Activated T-helper 1 cell treated with anti-CD3 and anti-CD28 coated beads, Interleukin-12 subunit alpha, Interleukin-12 subunit beta, Interleukin-2, Interleukin-4 antibody, amounts not matched to agents 30 ng/mL and 10 ng/mL and 1 ng/mL, durations not matched to agents 14 hours and 24 hours and 36 hours (primary cell): ENCODE measurements at regions of chr3 and their contacts with region 1.

Region 1: GRCh38 chr3:15427182-15427880 is at the starts of genes EAF1 and METTL6:
- DNase-seq: peak; percentile 81
- H3K4me3 Mint-ChIP-seq: peak within 1 kb of the TSS; percentile 97
- H3K27ac Mint-ChIP-seq: peak within 1 kb of the TSS; percentile 96
- H3K4me1 Mint-ChIP-seq: peaks cover 61% of the 10 kb centered on the region
- H3K27me3 Mint-ChIP-seq: no peaks in the 10 kb centered on the region
- total RNA-seq, gene EAF1: 27.3 and 27.8 TPM in 2 replicates
- total RNA-seq, gene METTL6: 15.0 and 15.8 TPM in 2 replicates

Region 2: DNA sequence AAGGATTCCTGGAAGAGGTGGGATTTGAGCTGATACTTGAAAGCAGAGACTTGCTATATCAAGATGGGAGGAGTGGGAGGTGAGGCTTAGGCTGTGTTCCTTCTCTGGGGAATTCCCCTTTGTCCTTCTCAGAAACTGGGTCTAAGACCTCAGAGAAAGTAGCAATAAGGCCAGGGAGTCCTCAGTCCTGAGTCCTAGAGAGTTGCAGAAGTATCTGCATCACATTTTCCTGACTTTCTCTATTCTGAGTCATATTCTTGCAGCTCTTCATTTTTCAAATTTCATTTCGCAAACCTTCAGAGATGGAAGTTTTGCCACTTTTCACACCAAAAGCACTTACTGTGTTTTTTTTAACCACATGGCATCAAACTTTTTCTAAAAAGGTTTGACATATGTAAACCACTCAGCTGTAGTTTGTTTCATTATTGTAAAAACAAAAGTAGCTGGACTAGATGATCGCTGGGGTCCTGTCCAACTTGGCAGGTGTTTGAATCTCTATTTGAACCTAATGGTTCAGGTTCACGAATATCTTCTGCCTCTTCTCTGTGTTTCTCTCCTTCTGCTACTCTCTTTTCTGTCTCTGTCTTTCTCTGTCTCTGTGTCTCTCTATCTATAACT is 72.9 kb after region 1 on chr3:
- intact Hi-C with region 1: loop called (anchors 1 kb)
- DNase-seq: no peak
- H3K4me3 Mint-ChIP-seq: no peak overlapping the region
- H3K27ac Mint-ChIP-seq: peak overlapping the region; percentile 37
- H3K4me1 Mint-ChIP-seq: peaks cover 38% of the 10 kb centered on the region
- H3K27me3 Mint-ChIP-seq: peaks cover under 1% of the 10 kb centered on the region

Region 3: GRCh38 chr3:15859507-15860013 is 432.2 kb after region 1 on chr3:
- intact Hi-C with region 1: loop called (anchors 2 kb)
- DNase-seq: peak; percentile 78
- H3K4me3 Mint-ChIP-seq: peak overlapping the region; percentile 92
- H3K27ac Mint-ChIP-seq: peak overlapping the region; percentile 91
- H3K4me1 Mint-ChIP-seq: peaks cover 33% of the 10 kb centered on the region
- H3K27me3 Mint-ChIP-seq: peaks cover 3% of the 10 kb centered on the region